ENCODE measurements at regions of chr2 and their contacts with region 1.

Region 1: DNA sequence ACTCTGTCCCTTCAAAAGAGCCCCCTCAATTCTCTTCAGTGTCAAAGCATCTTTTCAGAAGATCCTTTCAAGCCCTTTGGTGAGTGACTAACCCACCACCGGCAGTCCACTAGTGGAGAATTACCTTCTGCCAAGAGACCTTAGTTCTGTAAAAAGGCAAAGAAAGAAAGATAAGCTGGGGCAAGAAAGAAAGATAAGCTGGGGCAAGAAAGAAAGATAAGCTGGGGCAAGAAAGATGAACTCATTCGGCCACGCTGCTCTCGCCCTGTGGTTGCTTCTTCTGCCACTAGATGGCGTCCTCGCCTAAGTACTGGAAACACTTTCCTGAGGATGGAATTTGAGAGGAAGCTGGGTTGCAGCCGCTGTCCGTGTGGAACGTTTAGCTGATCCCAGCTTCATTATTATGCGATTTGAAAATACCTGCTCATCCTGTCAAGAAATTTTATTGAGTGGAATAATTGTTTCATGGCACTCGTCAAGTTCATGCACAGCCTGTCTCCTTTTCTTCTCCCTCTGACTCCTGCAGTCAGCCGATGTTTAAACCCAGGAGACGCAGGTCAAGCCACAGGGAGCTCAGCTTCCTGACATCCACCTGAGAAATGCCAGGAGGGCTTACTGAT is 17.3 kb upstream of the ANXA4 start:
- DNase-seq: peak; percentile 85
- ATAC-seq: peak; percentile 86 to 92

Region 2: GRCh38 chr2:69816923-69817542 is 92.4 kb after region 1 on chr2:
- intact Hi-C with region 1: loop called (anchors 1 to 2 kb)
- DNase-seq: peak; percentile 57
- ATAC-seq: peak; percentile 71 to 76